ENCODE measurements at regions of chr10 and their contacts with region 1.

Region 1: DNA sequence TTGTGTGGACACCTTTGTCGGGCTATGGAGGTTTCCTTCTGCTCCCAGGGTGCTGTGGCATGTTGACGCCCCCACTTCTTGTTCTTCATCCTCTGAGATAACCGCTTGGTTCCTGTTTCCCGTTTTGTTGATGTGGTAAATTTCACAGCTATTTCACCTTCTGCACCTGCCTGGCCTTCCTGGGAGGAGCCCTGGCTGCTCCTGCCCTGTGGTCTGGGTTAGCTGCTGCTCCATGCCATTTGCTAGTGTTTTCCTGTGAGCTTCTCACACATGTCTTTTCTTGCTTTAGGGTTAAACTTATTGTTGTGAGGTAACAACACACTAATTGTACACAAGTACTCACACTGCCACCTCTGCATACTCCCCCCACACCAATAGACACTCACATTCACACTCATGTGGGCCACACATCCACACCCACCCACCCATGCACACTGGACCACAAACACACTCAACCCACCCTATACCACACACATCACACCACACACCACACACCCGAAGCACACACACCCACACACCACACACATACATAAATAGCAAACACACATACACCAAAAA is 46.5 kb upstream of the MSMB start:
- DNase-seq: peak in 4 of 5 donors; percentile 53 to 69 (median 63)
- H3K4me3 ChIP-seq: peak overlapping the region; percentile 43 to 65
- H3K4me3 Mint-ChIP-seq: no peak overlapping the region
- H3K27ac ChIP-seq: peak overlapping the region; percentile 30
- H3K27ac Mint-ChIP-seq: no peak overlapping the region
- H3K4me1 ChIP-seq: peaks cover 80% of the 10 kb centered on the region
- H3K4me1 Mint-ChIP-seq: peaks cover 0 to 38% (median 19%) of the 10 kb centered on the region in 4 donors
- H3K27me3 ChIP-seq: no peaks in the 10 kb centered on the region
- H3K27me3 Mint-ChIP-seq: no peaks in the 10 kb centered on the region

Region 2: GRCh38 chr10:45353186-45353585 is 739.4 kb before region 1 on chr10:
- CTCF ChIA-PET with region 1: no interaction called
- POLR2A ChIA-PET with region 1: no interaction called
- intact Hi-C with region 1: no loop called
- DNase-seq: no peak
- H3K4me3 ChIP-seq: no peak overlapping the region
- H3K4me3 Mint-ChIP-seq: peak overlapping the region in 1 of 8 donors; percentile 67
- H3K27ac ChIP-seq: no peak overlapping the region
- H3K27ac Mint-ChIP-seq: peak overlapping the region in 1 of 7 donors; percentile 5
- H3K4me1 ChIP-seq: no peaks in the 10 kb centered on the region
- H3K4me1 Mint-ChIP-seq: peaks cover 8 to 19% (median 10%) of the 10 kb centered on the region in 4 donors
- H3K27me3 ChIP-seq: no peaks in the 10 kb centered on the region
- H3K27me3 Mint-ChIP-seq: peaks cover 4% of the 10 kb centered on the region in 2 donors

Region 3: GRCh38 chr10:46079831-46080575 is 12.6 kb before region 1 on chr10:
- CTCF ChIA-PET with region 1: interaction called, 11 read pairs
- POLR2A ChIA-PET with region 1: interaction called, 15 read pairs
- intact Hi-C with region 1: no loop called
- DNase-seq: no peak
- H3K4me3 ChIP-seq: no peak overlapping the region
- H3K4me3 Mint-ChIP-seq: peak overlapping the region in 1 of 8 donors; percentile 17
- H3K27ac ChIP-seq: no peak overlapping the region
- H3K27ac Mint-ChIP-seq: peak overlapping the region in 6 of 7 donors; percentile 42 to 83 (median 66)
- H3K4me1 ChIP-seq: peaks cover 18% of the 10 kb centered on the region
- H3K4me1 Mint-ChIP-seq: peaks cover 18 to 57% (median 34%) of the 10 kb centered on the region in 4 donors
- H3K27me3 ChIP-seq: no peaks in the 10 kb centered on the region
- H3K27me3 Mint-ChIP-seq: no peaks in the 10 kb centered on the region

Region 4: GRCh38 chr10:46106410-46107255 is 14.0 kb after region 1 on chr10:
- CTCF ChIA-PET with region 1: interaction called, 3 read pairs
- POLR2A ChIA-PET with region 1: interaction called, 33 read pairs
- intact Hi-C with region 1: no loop called
- DNase-seq: peak in 4 of 5 donors; percentile 43 to 60 (median 48)
- H3K4me3 ChIP-seq: peak overlapping the region in 1 of 2 donors; percentile 30
- H3K4me3 Mint-ChIP-seq: peak overlapping the region; percentile 78 to 97 (median 92)
- H3K27ac ChIP-seq: peak overlapping the region; percentile 60
- H3K27ac Mint-ChIP-seq: peak overlapping the region in 6 of 7 donors; percentile 9 to 87 (median 51)
- H3K4me1 ChIP-seq: peaks cover 13% of the 10 kb centered on the region
- H3K4me1 Mint-ChIP-seq: peaks cover 13 to 21% (median 15%) of the 10 kb centered on the region in 4 donors
- H3K27me3 ChIP-seq: no peaks in the 10 kb centered on the region
- H3K27me3 Mint-ChIP-seq: peaks cover 2 to 3% of the 10 kb centered on the region in 2 donors

Region 5: GRCh38 chr10:46175296-46175695 is 82.7 kb after region 1 on chr10:
- CTCF ChIA-PET with region 1: no interaction called
- POLR2A ChIA-PET with region 1: no interaction called
- intact Hi-C with region 1: no loop called
- DNase-seq: no peak
- H3K4me3 ChIP-seq: no peak overlapping the region
- H3K4me3 Mint-ChIP-seq: no peak overlapping the region
- H3K27ac ChIP-seq: no peak overlapping the region
- H3K27ac Mint-ChIP-seq: no peak overlapping the region
- H3K4me1 ChIP-seq: no peaks in the 10 kb centered on the region
- H3K4me1 Mint-ChIP-seq: peaks cover 0 to 3% (median 0%) of the 10 kb centered on the region in 4 donors
- H3K27me3 ChIP-seq: no peaks in the 10 kb centered on the region
- H3K27me3 Mint-ChIP-seq: no peaks in the 10 kb centered on the region